Heart left ventricle (tissue), 16 donors: ENCODE measurements at regions of chr3 and their contacts with region 1.

Region 1: DNA sequence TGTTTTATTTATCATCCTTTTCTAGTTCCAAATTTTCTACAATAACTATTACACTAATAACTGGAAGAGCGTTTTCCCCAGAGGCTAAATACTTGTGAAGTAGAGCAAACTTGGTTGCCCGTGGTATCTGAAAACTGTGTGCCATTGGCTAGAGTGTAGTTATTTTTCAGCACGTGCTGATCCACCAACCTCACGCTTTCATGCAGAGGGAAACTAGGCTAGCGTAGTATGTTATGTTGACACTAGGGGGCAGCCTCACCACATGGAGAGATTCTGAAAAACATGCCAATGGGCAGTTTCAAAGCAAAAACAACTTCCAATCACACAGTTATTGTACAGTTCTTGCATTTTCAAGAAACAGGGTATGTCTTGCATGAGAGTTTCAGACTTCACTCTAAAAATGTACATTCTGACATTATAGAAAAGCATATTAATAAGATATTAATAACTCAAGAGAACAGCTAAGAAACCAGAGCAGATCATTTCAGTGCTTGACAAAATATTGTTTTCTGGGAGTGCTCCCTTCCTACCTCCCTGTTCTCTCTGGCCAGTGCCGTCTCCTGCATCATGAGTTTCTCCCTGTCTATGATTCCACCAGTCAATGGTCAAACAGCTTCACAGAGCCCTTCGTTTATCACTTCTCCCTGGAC is 39.7 kb downstream of the SPATA12 start:
- DNase-seq: peak in 4 of 5 donors; percentile 48 to 62 (median 52)
- ATAC-seq: peak in 3 of 4 donors; percentile 81 to 83 (median 82)
- H3K4me3 ChIP-seq: no peak overlapping the region
- H3K27ac ChIP-seq: peak overlapping the region in 1 of 12 donors; percentile 31
- H3K4me1 ChIP-seq: peaks cover 0 to 4% (median 0%) of the 10 kb centered on the region in 12 donors
- H3K27me3 ChIP-seq: no peaks in the 10 kb centered on the region
- CTCF ChIP-seq: peak; percentile 88 to 96 (median 92)
- POLR2A ChIP-seq: no peak

Region 2: DNA sequence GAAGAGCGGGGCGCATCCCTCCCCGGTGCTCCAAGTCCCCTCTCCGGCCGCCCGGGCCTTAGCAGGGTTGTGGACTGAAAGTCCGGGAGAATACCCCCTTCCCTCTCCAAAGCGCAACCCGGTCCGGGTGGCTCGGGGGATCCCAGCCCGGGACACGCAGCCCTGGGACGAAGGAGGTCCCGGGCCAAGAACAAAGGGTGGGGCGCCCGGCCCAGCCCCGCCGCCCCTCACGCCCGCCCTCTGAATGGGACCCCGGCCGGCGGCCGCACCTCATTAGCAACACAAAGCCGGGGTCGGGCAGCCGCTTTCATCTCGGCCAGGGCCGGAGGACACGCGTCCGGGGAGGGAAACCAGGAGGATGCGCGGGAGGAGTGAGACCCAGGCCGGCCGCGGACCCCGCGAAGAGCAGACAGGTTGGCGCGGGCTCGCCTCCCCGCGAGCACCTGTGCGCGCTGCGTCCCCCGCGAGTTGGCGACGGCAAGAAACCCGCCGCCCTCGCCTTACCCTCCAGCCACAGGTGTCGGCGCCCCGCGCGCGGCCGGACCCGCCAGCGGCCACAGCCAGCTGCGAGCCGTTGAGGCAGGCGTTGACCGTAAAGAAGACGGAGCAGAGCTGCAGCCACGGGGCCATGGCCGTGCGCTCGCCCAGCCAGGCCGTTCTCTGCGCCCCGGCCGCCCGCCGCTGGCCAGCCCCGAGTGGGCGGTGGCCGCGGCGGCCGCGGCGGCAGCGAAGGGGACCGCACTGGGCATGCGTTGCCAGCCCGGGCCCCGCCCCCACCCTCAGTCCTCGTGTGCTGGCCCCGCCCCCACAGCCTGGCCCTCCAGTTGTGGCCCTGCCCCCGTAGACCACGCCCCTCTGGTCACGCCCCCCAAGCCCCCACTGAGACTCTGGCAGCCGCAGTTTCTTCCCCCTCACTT is 64.7 kb after region 1 on chr3 and contains the start of gene IL17RD:
- intact Hi-C with region 1: loop called in 9 of 10 experiments (anchors 2 to 10 kb)
- DNase-seq: peak; percentile 83 to 90 (median 88)
- ATAC-seq: peak; percentile 77 to 94 (median 88)
- H3K4me3 ChIP-seq: peak within 1 kb of the TSS; percentile 72 to 97 (median 85)
- H3K27ac ChIP-seq: peak within 1 kb of the TSS in 11 of 12 donors; percentile 20 to 82 (median 66)
- H3K4me1 ChIP-seq: peaks cover 0 to 56% (median 32%) of the 10 kb centered on the region in 12 donors
- H3K27me3 ChIP-seq: peaks cover 0 to 38% (median 0%) of the 10 kb centered on the region in 9 donors
- CTCF ChIP-seq: no peak
- POLR2A ChIP-seq: peak in 1 of 2 donors; percentile 60
- total RNA-seq, gene IL17RD: 3.5 to 11.3 (median 6.2) TPM

Region 3: GRCh38 chr3:57169872-57170623 is 69.9 kb after region 1 on chr3:
- intact Hi-C with region 1: loop called in 8 of 10 experiments (anchors 2 to 10 kb)
- DNase-seq: peak; percentile 74 to 88 (median 79)
- ATAC-seq: peak; percentile 62 to 89 (median 80)
- H3K4me3 ChIP-seq: peak overlapping the region; percentile 1 to 64 (median 55)
- H3K27ac ChIP-seq: peak overlapping the region in 5 of 12 donors; percentile 18 to 55 (median 31)
- H3K4me1 ChIP-seq: peaks cover 0 to 17% (median 5%) of the 10 kb centered on the region in 12 donors
- H3K27me3 ChIP-seq: peaks cover 0 to 10% (median 0%) of the 10 kb centered on the region in 9 donors
- CTCF ChIP-seq: peak; percentile 78 to 94 (median 85)
- POLR2A ChIP-seq: no peak

Region 4: GRCh38 chr3:57221883-57222282 is 121.7 kb after region 1 on chr3:
- intact Hi-C with region 1: loop called (anchors 1 to 10 kb)
- DNase-seq: no peak
- ATAC-seq: no peak
- H3K4me3 ChIP-seq: no peak overlapping the region
- H3K27ac ChIP-seq: no peak overlapping the region
- H3K4me1 ChIP-seq: peaks cover 0 to 16% (median 5%) of the 10 kb centered on the region in 12 donors
- H3K27me3 ChIP-seq: no peaks in the 10 kb centered on the region
- CTCF ChIP-seq: peak in 10 of 12 donors; percentile 9 to 53 (median 34)
- POLR2A ChIP-seq: no peak

Region 5: GRCh38 chr3:57434041-57434440 is 333.9 kb after region 1 on chr3:
- intact Hi-C with region 1: loop called in 1 of 10 experiments (anchors 10 kb)
- DNase-seq: no peak
- ATAC-seq: no peak
- H3K4me3 ChIP-seq: no peak overlapping the region
- H3K27ac ChIP-seq: no peak overlapping the region
- H3K4me1 ChIP-seq: no peaks in the 10 kb centered on the region
- H3K27me3 ChIP-seq: no peaks in the 10 kb centered on the region
- CTCF ChIP-seq: peak in 8 of 12 donors; percentile 7 to 41 (median 29)
- POLR2A ChIP-seq: no peak